CD8-positive, alpha-beta T cell (primary cell): ENCODE measurements at regions of chr21 and their contacts with region 1.

Region 1: DNA sequence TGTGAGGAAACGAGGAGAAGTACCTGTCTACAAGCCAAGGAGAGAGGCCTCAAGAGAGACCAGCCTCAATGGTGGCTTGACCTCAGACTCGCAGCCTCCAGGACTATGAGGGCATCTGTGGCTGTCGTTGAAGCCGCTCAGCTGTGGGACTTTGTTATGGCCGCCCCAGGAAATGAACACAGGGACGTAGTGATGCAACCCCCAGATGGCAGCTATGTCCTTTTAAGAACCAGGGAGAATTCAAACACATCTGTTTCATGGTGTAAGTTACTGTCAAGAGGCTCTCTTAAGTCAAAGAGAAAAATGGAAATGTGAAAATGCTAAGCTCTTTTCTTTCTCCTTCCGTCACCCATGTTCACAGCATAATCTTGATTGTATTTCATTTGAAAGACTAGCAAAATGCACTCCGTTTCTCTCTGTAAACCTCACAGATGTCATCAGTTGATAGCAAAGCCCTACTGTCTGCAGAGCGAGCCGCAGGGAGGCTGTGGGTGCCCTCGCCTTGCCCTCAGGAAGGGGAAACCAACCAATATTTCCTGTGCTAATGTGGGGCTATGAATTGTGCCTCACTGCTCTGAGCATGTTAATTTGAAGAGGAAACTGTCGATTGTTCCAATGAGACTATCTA is 21.3 kb downstream of the UBASH3A start:
- DNase-seq: peak; percentile 66 to 94 (median 81)
- ATAC-seq: peak; percentile 80
- H3K4me3 ChIP-seq: peak overlapping the region; percentile 27 to 29
- H3K4me3 Mint-ChIP-seq: peak overlapping the region; percentile 67
- H3K27ac ChIP-seq: peak overlapping the region; percentile 63 to 67
- H3K27ac Mint-ChIP-seq: peak overlapping the region; percentile 91
- H3K4me1 ChIP-seq: peaks cover 65% of the 10 kb centered on the region
- H3K4me1 Mint-ChIP-seq: peaks cover 83% of the 10 kb centered on the region
- H3K27me3 ChIP-seq: peaks cover 0 to 4% of the 10 kb centered on the region in 2 experiments
- H3K27me3 Mint-ChIP-seq: no peaks in the 10 kb centered on the region
- CTCF ChIP-seq: no peak

Region 2: GRCh38 chr21:42337830-42338728 is 86.9 kb before region 1 on chr21:
- CTCF ChIA-PET with region 1: interaction called, 28 read pairs
- POLR2A ChIA-PET with region 1: interaction called, 3 read pairs
- intact Hi-C with region 1: loop called in 1 of 2 experiments (anchors 1 kb)
- DNase-seq: peak; percentile 77 to 91 (median 85)
- ATAC-seq: peak; percentile 100
- H3K4me3 ChIP-seq: no peak overlapping the region
- H3K4me3 Mint-ChIP-seq: peak overlapping the region; percentile 42
- H3K27ac ChIP-seq: no peak overlapping the region
- H3K27ac Mint-ChIP-seq: peak overlapping the region; percentile 47
- H3K4me1 ChIP-seq: peaks cover 12% of the 10 kb centered on the region
- H3K4me1 Mint-ChIP-seq: peaks cover 9% of the 10 kb centered on the region
- H3K27me3 ChIP-seq: no peaks in the 10 kb centered on the region
- H3K27me3 Mint-ChIP-seq: no peaks in the 10 kb centered on the region
- CTCF ChIP-seq: peak; percentile 83

Region 3: DNA sequence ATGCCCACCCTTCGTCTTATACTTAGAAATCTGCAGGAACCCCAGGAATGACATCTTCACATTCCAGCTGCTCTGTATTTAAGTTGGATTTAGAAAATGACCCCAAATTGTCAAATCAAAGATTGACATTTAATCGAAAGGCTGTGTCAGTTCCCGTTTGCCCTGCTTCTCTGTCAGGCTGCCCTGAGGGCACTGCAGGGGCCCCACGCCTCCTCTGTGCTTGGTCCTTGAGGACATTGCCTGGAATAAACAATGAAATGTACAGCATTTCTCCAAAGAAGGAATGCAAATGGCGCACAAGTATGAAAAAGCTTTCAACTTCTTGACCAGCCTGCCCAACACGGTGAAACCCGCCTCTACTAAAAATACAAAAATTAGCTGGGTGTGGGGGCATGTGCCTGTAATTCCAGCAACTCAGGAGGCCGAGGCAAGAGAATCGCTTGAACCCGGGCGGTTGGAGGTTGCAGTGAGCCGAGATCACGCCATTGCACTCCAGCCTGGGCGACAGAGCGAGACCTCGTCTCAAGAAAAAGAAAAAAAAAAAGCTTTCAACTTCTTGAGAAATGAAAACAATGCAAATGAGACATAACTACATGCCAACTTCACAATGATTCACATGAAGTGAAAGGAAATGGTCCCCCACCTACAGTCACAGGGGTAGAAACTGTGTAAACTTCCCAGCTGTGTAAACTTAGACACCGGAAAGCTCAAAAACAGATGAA is 32.1 kb before region 1 on chr21:
- CTCF ChIA-PET with region 1: interaction called, 8 read pairs
- POLR2A ChIA-PET with region 1: interaction called, 6 read pairs
- intact Hi-C with region 1: loop called in 1 of 2 experiments (anchors 5 kb)
- DNase-seq: peak in 4 of 9 experiments; percentile 33 to 79 (median 44)
- ATAC-seq: peak; percentile 92
- H3K4me3 ChIP-seq: peak overlapping the region; percentile 5 to 29
- H3K4me3 Mint-ChIP-seq: peak overlapping the region; percentile 66
- H3K27ac ChIP-seq: peak overlapping the region; percentile 28 to 33
- H3K27ac Mint-ChIP-seq: peak overlapping the region; percentile 89
- H3K4me1 ChIP-seq: peaks cover 31% of the 10 kb centered on the region
- H3K4me1 Mint-ChIP-seq: peaks cover 67% of the 10 kb centered on the region
- H3K27me3 ChIP-seq: no peaks in the 10 kb centered on the region
- H3K27me3 Mint-ChIP-seq: no peaks in the 10 kb centered on the region
- CTCF ChIP-seq: no peak

Region 4: DNA sequence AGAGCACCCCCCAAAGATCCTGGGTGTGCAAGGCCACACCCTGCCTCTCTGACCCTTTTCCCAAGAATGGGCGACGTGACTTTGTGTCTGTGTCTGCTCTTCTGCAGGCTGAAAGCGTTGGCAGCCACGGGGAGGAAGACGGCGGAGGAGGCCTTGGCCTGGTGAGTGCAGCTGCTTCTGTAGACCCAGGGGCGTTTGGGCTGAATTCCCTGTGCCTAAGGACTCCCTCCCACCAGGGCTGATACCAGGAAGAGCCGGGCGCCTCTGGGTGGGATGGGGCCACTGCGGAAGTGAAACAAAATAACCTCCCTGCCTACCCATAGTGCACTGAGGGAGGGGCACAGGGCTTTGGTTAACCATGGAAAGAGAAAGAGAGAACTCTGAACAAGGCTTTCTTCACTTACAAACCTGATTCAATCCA is 18.8 kb before region 1 on chr21:
- CTCF ChIA-PET with region 1: interaction called, 23 read pairs
- POLR2A ChIA-PET with region 1: interaction called, 155 read pairs
- intact Hi-C with region 1: loop called (anchors 1 kb)
- DNase-seq: peak in 7 of 9 experiments; percentile 25 to 82 (median 64)
- ATAC-seq: peak; percentile 59
- H3K4me3 ChIP-seq: peak overlapping the region; percentile 74 to 93
- H3K4me3 Mint-ChIP-seq: peak overlapping the region; percentile 89
- H3K27ac ChIP-seq: peak overlapping the region; percentile 71 to 86
- H3K27ac Mint-ChIP-seq: peak overlapping the region; percentile 94
- H3K4me1 ChIP-seq: peaks cover 64% of the 10 kb centered on the region
- H3K4me1 Mint-ChIP-seq: peaks cover 70% of the 10 kb centered on the region
- H3K27me3 ChIP-seq: peaks cover 0 to 2% of the 10 kb centered on the region in 2 experiments
- H3K27me3 Mint-ChIP-seq: no peaks in the 10 kb centered on the region
- CTCF ChIP-seq: no peak

Region 5: DNA sequence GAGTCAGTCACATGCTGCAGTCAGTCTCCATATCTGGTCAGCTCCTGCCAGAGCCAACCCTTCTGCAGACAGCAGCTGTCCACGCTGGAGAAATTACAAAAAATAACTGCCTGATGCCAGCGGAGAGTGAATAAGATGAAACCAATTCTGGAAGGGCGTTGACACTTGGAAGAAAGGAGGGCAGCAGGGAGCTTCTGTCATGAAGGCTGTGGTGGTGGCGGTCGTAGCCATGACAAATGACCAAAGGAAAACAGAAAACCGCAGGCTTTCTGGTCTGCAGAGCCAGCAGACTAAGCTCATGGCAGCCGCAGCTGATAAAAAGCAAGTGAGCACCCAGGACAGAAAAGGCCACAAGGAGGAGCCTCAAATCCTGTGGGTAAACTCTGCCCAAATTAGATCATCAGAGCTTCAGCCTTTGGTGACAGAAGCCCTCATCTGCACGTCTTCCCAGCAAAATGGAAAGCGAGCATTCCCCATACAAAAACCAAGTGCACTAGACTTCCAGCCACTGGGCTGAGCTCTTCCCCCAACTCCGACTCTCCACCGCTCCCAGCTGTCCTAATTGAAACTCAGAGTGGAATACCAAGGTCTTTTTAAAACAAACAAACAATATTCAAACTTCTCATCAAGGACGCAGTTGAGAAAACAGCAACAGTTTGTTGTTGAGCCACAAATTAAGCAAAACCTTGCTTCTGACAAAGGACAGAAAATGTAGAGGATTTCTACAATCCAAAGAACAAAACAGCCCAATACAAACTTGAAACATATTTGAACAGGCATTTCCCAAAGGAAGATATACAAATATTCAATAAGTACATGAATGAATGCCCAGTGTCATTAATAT is 42.3 kb after region 1 on chr21:
- CTCF ChIA-PET with region 1: no interaction called
- POLR2A ChIA-PET with region 1: no interaction called
- intact Hi-C with region 1: no loop called
- DNase-seq: peak in 3 of 9 experiments; percentile 36 to 58 (median 38)
- ATAC-seq: no peak
- H3K4me3 ChIP-seq: no peak overlapping the region
- H3K4me3 Mint-ChIP-seq: no peak overlapping the region
- H3K27ac ChIP-seq: no peak overlapping the region
- H3K27ac Mint-ChIP-seq: no peak overlapping the region
- H3K4me1 ChIP-seq: peaks cover 35% of the 10 kb centered on the region
- H3K4me1 Mint-ChIP-seq: peaks cover 37% of the 10 kb centered on the region
- H3K27me3 ChIP-seq: no peaks in the 10 kb centered on the region
- H3K27me3 Mint-ChIP-seq: no peaks in the 10 kb centered on the region
- CTCF ChIP-seq: peak; percentile 27

Region 6: DNA sequence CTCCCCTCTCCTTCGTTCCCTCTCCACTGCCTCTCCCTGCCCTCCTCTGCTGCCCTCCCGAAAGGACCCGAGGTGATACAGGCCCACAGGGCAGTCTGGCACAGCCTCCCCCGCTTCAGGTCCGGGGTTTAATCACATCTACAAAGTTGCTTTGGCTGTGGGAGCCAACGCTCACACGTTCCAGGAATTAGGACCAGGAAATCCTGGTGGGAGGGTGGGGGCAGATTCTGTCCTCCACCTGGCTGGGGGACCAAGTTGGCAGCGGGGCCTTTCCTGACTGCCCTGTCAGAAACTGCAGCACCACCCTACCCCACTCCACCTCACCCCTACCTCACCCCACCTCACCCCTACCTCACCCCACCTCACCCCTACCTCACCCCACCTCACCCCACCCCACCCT is 359.2 kb after region 1 on chr21:
- CTCF ChIA-PET with region 1: no interaction called
- POLR2A ChIA-PET with region 1: no interaction called
- intact Hi-C with region 1: no loop called
- DNase-seq: peak in 4 of 9 experiments; percentile 14 to 37 (median 22)
- ATAC-seq: peak; percentile 25
- H3K4me3 ChIP-seq: peak overlapping the region; percentile 40 to 55
- H3K4me3 Mint-ChIP-seq: peak overlapping the region; percentile 75
- H3K27ac ChIP-seq: peak overlapping the region; percentile 91 to 93
- H3K27ac Mint-ChIP-seq: peak overlapping the region; percentile 99
- H3K4me1 ChIP-seq: peaks cover 44% of the 10 kb centered on the region
- H3K4me1 Mint-ChIP-seq: peaks cover 55% of the 10 kb centered on the region
- H3K27me3 ChIP-seq: no peaks in the 10 kb centered on the region
- H3K27me3 Mint-ChIP-seq: no peaks in the 10 kb centered on the region
- CTCF ChIP-seq: no peak